ENCODE measurements at regions of chr3 and their contacts with region 1.

Region 1: GRCh38 chr3:102229062-102229655 is 205.7 kb upstream of the ZPLD1 start:
- DNase-seq: peak; percentile 30 to 89 (median 70)
- H3K4me3 ChIP-seq: peak overlapping the region in 7 of 59 donors; percentile 1 to 33 (median 16)
- H3K27ac ChIP-seq: no peak overlapping the region
- H3K27me3 ChIP-seq: peaks cover 0 to 8% (median 0%) of the 10 kb centered on the region in 45 donors
- CTCF ChIP-seq: peak; percentile 80 to 99 (median 96)

Region 2: DNA sequence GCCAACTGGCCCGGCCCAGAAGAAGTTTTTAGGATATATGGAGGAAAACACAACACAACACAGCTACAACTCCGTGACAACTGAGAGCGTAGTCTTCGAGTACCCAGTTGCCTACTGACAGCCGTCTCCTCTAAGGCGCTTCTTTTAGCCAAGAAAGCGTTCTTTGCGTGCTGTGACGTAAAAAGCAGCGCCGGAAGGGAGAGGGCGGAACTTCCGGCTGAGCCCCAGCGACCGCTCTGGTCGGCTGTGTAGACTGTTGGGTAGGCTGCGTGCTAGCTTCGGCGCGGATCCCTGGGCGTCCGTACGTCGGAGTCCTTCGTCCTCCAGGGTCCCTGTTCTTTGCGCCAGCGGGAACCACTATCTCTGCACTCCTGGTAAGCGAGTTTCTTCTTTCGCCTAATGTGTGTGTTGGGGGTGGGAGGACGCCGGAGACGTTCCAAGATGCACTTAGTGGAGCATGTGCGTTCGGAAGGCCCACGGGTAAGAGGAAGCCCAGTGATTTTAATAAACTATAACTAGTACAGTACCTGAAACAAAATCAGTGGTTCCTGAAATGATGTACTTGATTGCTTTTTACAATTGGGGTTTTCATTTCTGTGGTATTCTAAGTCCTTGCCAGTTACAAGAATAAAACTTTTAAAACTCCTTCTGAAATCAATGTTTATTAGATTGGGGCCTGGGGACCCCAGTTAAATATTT is 667.4 kb before region 1 on chr3 and contains the start of gene TRMT10C:
- intact Hi-C with region 1: loop called in 1 of 2 experiments (anchors 5 kb)
- DNase-seq: peak; percentile 89 to 96 (median 94)
- H3K4me3 ChIP-seq: peak within 1 kb of the TSS; percentile 60 to 99 (median 89)
- H3K27ac ChIP-seq: peak within 1 kb of the TSS; percentile 4 to 93 (median 82)
- H3K27me3 ChIP-seq: peaks cover 0 to 20% (median 0%) of the 10 kb centered on the region in 45 donors
- CTCF ChIP-seq: peak in 27 of 56 donors; percentile 9 to 44 (median 26)
- total RNA-seq, gene TRMT10C: 8.7 to 26.3 (median 18.7) TPM

Region 3: GRCh38 chr3:101695779-101696372 is 533.3 kb before region 1 on chr3:
- intact Hi-C with region 1: loop called (anchors 5 to 10 kb)
- DNase-seq: peak in 2 of 10 donors; percentile 30 to 57
- H3K4me3 ChIP-seq: peak overlapping the region in 3 of 59 donors; percentile 8 to 14 (median 14)
- H3K27ac ChIP-seq: peak overlapping the region in 27 of 59 donors; percentile 5 to 75 (median 52)
- H3K27me3 ChIP-seq: no peaks in the 10 kb centered on the region
- CTCF ChIP-seq: peak; percentile 72 to 94 (median 84)

Region 4: DNA sequence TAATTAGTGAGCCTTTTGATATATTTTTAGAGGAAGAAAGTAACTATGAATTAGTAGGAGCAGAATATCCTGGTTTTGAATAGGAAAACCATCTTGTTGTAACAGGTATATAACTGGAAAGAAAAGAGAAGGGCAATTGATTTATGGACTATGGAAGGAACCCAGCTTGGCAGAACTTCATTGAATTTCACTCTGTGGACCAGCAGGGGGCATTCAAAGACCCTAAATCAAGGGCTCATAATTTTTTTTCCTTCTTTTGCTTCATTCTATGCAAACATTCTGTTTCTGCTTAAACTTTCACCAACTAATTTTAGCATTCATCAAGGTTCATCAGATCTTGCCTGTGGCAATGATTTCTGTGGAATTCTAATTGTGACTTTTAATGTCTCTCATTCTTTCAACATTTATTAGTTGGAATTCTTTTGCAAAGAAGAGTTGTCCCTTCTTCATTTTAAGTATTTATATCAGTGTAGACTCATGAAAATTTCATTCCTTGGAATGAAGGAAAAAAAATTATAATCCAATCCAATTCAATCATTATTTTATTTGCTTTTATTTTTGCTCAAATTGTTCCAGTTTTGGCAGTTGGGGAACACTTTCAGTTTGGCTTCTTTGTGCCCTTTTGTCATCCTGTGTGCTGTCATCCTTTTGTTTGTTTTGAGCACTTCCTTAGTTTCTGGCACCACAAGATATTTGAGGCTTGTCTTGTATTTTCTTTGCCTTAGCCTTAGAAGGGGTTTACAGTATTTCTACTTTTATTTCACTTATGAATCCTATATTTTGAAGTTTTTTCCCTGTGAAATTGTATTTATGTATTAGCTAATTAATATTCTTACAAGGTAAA is 419.8 kb before region 1 on chr3:
- intact Hi-C with region 1: loop called (anchors 2 to 5 kb)
- DNase-seq: no peak
- H3K4me3 ChIP-seq: no peak overlapping the region
- H3K27ac ChIP-seq: peak overlapping the region in 19 of 59 donors; percentile 3 to 74 (median 26)
- H3K27me3 ChIP-seq: no peaks in the 10 kb centered on the region
- CTCF ChIP-seq: peak; percentile 38 to 85 (median 73)

Region 5: GRCh38 chr3:102174312-102174712 is 54.8 kb before region 1 on chr3:
- intact Hi-C with region 1: no loop called
- DNase-seq: no peak
- H3K4me3 ChIP-seq: no peak overlapping the region
- H3K27ac ChIP-seq: no peak overlapping the region
- H3K27me3 ChIP-seq: peaks cover 0 to 3% (median 0%) of the 10 kb centered on the region in 45 donors
- CTCF ChIP-seq: no peak

Region 6: DNA sequence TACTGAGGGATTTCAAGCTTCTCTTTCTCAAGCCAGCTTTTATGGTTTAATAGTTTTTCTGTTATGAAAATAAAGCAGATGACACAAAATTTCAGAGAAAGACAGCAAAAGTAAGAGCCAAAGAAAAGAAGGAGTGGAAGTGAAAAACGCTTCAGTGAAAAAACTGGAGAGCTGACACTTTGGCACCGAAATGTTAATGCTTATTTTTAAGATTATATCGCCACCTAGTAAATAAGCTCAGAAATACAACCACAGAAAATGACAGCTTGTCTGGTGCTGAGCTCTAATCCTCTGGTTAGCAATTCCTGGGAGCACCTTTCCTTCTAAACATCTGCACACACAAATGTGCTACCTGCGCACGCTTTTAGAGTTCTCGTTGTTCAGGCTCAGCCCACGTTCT is 307.3 kb after region 1 on chr3:
- intact Hi-C with region 1: loop called in 1 of 2 experiments (anchors 5 kb)
- DNase-seq: no peak
- H3K4me3 ChIP-seq: peak overlapping the region in 10 of 59 donors; percentile 5 to 45 (median 16)
- H3K27ac ChIP-seq: no peak overlapping the region
- H3K27me3 ChIP-seq: peaks cover 0 to 14% (median 0%) of the 10 kb centered on the region in 45 donors
- CTCF ChIP-seq: peak; percentile 18 to 83 (median 63)